GM12878 (cell line): ENCODE measurements at regions of chr2 and their contacts with region 1.

Region 1: GRCh38 chr2:96407041-96407918 is 71.7 kb downstream of the NCAPH start:
- DNase-seq: peak; percentile 26
- ATAC-seq: peak; percentile 95
- H3K4me3 ChIP-seq: no peak overlapping the region
- H3K27ac ChIP-seq: no peak overlapping the region
- H3K4me1 ChIP-seq: peaks cover 6% of the 10 kb centered on the region
- H3K27me3 ChIP-seq: no peaks in the 10 kb centered on the region
- CTCF ChIP-seq: peak; percentile 86 to 90 (median 87)
- EP300 ChIP-seq: no peak
- POLR2A ChIP-seq: no peak
- RAD21 ChIP-seq: peak; percentile 84

Region 2: GRCh38 chr2:94923196-94923595 is 1484.1 kb before region 1 on chr2:
- CTCF ChIA-PET with region 1: no interaction called
- POLR2A ChIA-PET with region 1: no interaction called
- RAD21 ChIA-PET with region 1: no interaction called
- SMC1A ChIA-PET with region 1: no interaction called
- in situ Hi-C with region 1: no loop called
- intact Hi-C with region 1: no loop called
- DNase-seq: no peak
- ATAC-seq: no peak
- H3K4me3 ChIP-seq: no peak overlapping the region
- H3K27ac ChIP-seq: no peak overlapping the region
- H3K4me1 ChIP-seq: no peaks in the 10 kb centered on the region
- H3K27me3 ChIP-seq: no peaks in the 10 kb centered on the region
- CTCF ChIP-seq: no peak
- EP300 ChIP-seq: no peak
- POLR2A ChIP-seq: no peak
- RAD21 ChIP-seq: no peak

Region 3: DNA sequence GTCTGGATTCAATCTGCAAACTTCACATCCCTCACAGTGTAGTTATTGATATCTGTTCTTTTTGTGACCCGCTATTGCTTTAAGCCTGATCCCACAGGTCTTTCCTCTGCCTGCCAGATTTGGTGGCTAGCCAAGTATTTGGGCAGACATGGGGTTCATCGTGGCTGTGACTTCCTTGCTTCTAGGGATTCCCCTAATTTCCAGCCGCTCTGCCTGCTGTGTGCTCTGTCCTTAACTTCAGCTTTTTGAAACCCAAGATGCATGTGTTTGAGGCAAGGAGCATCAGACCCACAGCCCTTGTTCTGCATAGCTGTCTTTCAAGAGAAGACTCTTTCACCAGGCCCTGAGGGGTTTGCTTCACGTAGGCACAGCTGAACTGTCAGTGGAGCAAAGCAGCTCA is 17.5 kb before region 1 on chr2:
- CTCF ChIA-PET with region 1: interaction called, 14 read pairs
- POLR2A ChIA-PET with region 1: no interaction called
- RAD21 ChIA-PET with region 1: interaction called, 3 read pairs
- SMC1A ChIA-PET with region 1: interaction called, 4 read pairs
- in situ Hi-C with region 1: no loop called
- intact Hi-C with region 1: no loop called
- DNase-seq: no peak
- ATAC-seq: peak; percentile 48
- H3K4me3 ChIP-seq: no peak overlapping the region
- H3K27ac ChIP-seq: no peak overlapping the region
- H3K4me1 ChIP-seq: no peaks in the 10 kb centered on the region
- H3K27me3 ChIP-seq: no peaks in the 10 kb centered on the region
- CTCF ChIP-seq: no peak
- EP300 ChIP-seq: no peak
- POLR2A ChIP-seq: no peak
- RAD21 ChIP-seq: no peak

Region 4: GRCh38 chr2:96485751-96486651 is 78.7 kb after region 1 on chr2:
- CTCF ChIA-PET with region 1: interaction called, 16 read pairs
- POLR2A ChIA-PET with region 1: no interaction called
- RAD21 ChIA-PET with region 1: interaction called, 5 read pairs
- SMC1A ChIA-PET with region 1: interaction called, 7 read pairs
- in situ Hi-C with region 1: no loop called
- intact Hi-C with region 1: no loop called
- DNase-seq: peak; percentile 97
- ATAC-seq: peak; percentile 92
- H3K4me3 ChIP-seq: peak overlapping the region; percentile 84
- H3K27ac ChIP-seq: peak overlapping the region; percentile 95
- H3K4me1 ChIP-seq: peaks cover 23% of the 10 kb centered on the region
- H3K27me3 ChIP-seq: no peaks in the 10 kb centered on the region
- CTCF ChIP-seq: no peak
- EP300 ChIP-seq: peak; percentile 53 to 91; a peak in 2 of 4 replicates
- POLR2A ChIP-seq: peak; percentile 97
- RAD21 ChIP-seq: no peak

Region 5: DNA sequence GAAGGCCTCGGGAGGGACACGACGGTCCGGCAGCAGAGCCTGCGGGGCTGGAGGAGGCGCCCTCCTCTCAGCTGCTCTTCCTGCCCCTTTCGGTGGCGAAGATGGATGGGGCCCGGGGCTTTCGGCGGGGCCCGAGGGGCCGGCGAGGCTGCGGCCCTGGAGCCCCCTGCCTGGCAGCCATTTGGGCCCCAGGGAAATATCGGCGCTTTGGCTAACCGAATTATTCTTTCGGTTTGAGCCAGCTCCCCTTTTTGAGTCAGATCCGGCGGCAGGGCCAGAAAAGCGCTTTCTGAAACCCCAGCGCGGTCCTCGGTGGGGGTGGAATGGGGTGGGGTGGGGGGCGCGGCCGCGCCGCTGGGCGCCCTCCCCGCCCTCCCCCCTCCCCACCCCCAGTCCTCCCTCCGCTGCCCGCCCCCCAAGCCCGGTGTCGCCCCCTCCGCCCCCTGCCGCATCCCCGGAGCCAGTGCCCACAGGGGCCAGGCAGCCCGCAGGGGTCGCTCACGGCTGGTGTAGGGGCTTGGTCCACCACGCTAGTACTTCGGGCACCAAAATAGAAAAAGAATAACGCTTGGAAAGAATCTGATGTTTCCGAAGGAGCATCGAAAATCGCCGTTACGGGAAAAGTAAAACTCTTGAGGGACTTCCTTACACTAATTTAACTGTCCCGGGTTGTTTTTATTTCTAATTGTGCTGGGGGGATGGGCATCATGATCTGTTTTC is 120.2 kb after region 1 on chr2:
- CTCF ChIA-PET with region 1: interaction called, 11 read pairs
- POLR2A ChIA-PET with region 1: no interaction called
- RAD21 ChIA-PET with region 1: interaction called, 3 read pairs
- SMC1A ChIA-PET with region 1: interaction called, 6 read pairs
- in situ Hi-C with region 1: no loop called
- intact Hi-C with region 1: no loop called
- DNase-seq: no peak
- ATAC-seq: peak; percentile 67
- H3K4me3 ChIP-seq: peak overlapping the region; percentile 39
- H3K27ac ChIP-seq: peak overlapping the region; percentile 97
- H3K4me1 ChIP-seq: peaks cover 88% of the 10 kb centered on the region
- H3K27me3 ChIP-seq: no peaks in the 10 kb centered on the region
- CTCF ChIP-seq: peak in 2 of 3 experiments; percentile 28 to 32; a peak in 3 of 6 replicates
- EP300 ChIP-seq: peak; percentile 65 to 70; a peak in 3 of 4 replicates
- POLR2A ChIP-seq: peak; percentile 73
- RAD21 ChIP-seq: peak; percentile 34; the same call in 1 of the 2 replicates

Region 6: GRCh38 chr2:96564563-96564962 is 157.3 kb after region 1 on chr2:
- CTCF ChIA-PET with region 1: interaction called, 5 read pairs
- POLR2A ChIA-PET with region 1: no interaction called
- RAD21 ChIA-PET with region 1: no interaction called
- SMC1A ChIA-PET with region 1: no interaction called
- in situ Hi-C with region 1: loop called (anchors 5 kb)
- intact Hi-C with region 1: no loop called
- DNase-seq: no peak
- ATAC-seq: no peak
- H3K4me3 ChIP-seq: no peak overlapping the region
- H3K27ac ChIP-seq: no peak overlapping the region
- H3K4me1 ChIP-seq: no peaks in the 10 kb centered on the region
- H3K27me3 ChIP-seq: no peaks in the 10 kb centered on the region
- CTCF ChIP-seq: no peak
- EP300 ChIP-seq: no peak
- POLR2A ChIP-seq: no peak
- RAD21 ChIP-seq: no peak

Region 7: GRCh38 chr2:96601382-96602292 is 194.4 kb after region 1 on chr2:
- CTCF ChIA-PET with region 1: no interaction called
- POLR2A ChIA-PET with region 1: no interaction called
- RAD21 ChIA-PET with region 1: no interaction called
- SMC1A ChIA-PET with region 1: no interaction called
- in situ Hi-C with region 1: no loop called
- intact Hi-C with region 1: no loop called
- DNase-seq: no peak
- ATAC-seq: no peak
- H3K4me3 ChIP-seq: no peak overlapping the region
- H3K27ac ChIP-seq: no peak overlapping the region
- H3K4me1 ChIP-seq: no peaks in the 10 kb centered on the region
- H3K27me3 ChIP-seq: no peaks in the 10 kb centered on the region
- CTCF ChIP-seq: no peak
- EP300 ChIP-seq: no peak
- POLR2A ChIP-seq: no peak
- RAD21 ChIP-seq: no peak